HCT116 (cell line): ENCODE measurements at regions of chr21 and their contacts with region 1.

Region 1: GRCh38 chr21:36589355-36589971 is 109.5 kb upstream of the SIM2 start:
- DNase-seq: peak; percentile 59
- ATAC-seq: peak; percentile 96
- H3K4me3 ChIP-seq: no peak overlapping the region
- H3K27ac ChIP-seq: no peak overlapping the region
- H3K4me1 ChIP-seq: peaks cover 3 to 17% of the 10 kb centered on the region in 2 experiments; a peak in 3 of 4 replicates
- H3K27me3 ChIP-seq: no peaks in the 10 kb centered on the region
- CTCF ChIP-seq: peak; percentile 64 to 82 (median 80)
- POLR2A ChIP-seq: no peak
- RAD21 ChIP-seq: peak; percentile 73

Region 2: GRCh38 chr21:36419996-36420395 is 169.5 kb before region 1 on chr21:
- CTCF ChIA-PET with region 1: no interaction called
- POLR2A ChIA-PET with region 1: no interaction called
- RAD21 ChIA-PET with region 1: no interaction called
- intact Hi-C with region 1: loop called (anchors 1 kb)
- DNase-seq: peak; percentile 77
- ATAC-seq: peak; percentile 90
- H3K4me3 ChIP-seq: no peak overlapping the region
- H3K27ac ChIP-seq: no peak overlapping the region
- H3K4me1 ChIP-seq: 0 out of 4 replicates have a peak, but pooled peaks cover 0 to 2% of the 10 kb centered on the region in 2 experiments
- H3K27me3 ChIP-seq: no peaks in the 10 kb centered on the region
- CTCF ChIP-seq: peak; percentile 45 to 81 (median 78); a peak in 5 of 6 replicates
- POLR2A ChIP-seq: no peak
- RAD21 ChIP-seq: peak; percentile 77

Region 3: GRCh38 chr21:36747815-36748383 is 158.4 kb after region 1 on chr21:
- CTCF ChIA-PET with region 1: no interaction called
- POLR2A ChIA-PET with region 1: no interaction called
- RAD21 ChIA-PET with region 1: no interaction called
- intact Hi-C with region 1: no loop called
- DNase-seq: no peak
- ATAC-seq: no peak
- H3K4me3 ChIP-seq: no peak overlapping the region
- H3K27ac ChIP-seq: no peak overlapping the region
- H3K4me1 ChIP-seq: no peaks in the 10 kb centered on the region
- H3K27me3 ChIP-seq: no peaks in the 10 kb centered on the region
- CTCF ChIP-seq: no peak
- POLR2A ChIP-seq: no peak
- RAD21 ChIP-seq: no peak

Region 4: DNA sequence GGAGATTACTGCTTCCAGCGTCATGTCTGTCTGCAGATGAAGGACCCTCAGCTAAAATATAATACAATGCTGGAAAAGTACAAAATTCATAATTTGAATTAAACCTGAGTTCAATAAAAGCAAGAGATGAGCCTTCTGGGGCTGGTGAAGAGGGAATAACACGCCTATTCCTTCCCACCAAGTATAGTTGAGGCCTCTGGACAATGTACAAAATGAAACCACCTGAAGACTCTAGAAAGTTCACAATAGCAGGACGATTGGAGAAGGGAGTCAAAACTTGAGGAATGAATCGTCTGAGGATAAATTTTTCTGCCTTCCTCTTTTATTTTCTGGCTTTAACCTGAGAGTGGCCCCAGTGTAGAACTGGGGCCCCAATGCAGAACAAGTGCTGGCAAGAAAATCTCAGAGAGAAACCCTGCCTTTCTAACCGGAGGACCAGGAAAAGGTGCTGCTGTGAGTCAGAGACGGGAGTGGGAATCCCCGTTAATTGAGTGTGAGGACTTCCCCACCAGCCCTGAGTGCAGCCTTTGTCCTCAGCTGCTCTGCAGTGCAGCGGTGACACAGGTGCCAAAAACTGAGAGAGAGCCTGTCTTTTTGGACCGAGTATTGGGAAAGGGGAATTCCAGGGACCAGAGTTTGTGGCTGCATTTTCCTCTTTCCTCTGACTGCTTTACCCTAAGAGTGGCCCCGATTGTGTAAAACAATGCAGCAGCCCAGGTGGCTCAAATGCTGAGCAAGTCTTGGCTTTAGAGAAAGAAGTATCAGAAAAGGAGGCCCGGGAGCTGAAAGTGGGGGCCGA is 1042.1 kb after region 1 on chr21:
- CTCF ChIA-PET with region 1: no interaction called
- POLR2A ChIA-PET with region 1: no interaction called
- RAD21 ChIA-PET with region 1: no interaction called
- intact Hi-C with region 1: no loop called
- DNase-seq: no peak
- ATAC-seq: no peak
- H3K4me3 ChIP-seq: no peak overlapping the region
- H3K27ac ChIP-seq: no peak overlapping the region
- H3K4me1 ChIP-seq: no peaks in the 10 kb centered on the region
- H3K27me3 ChIP-seq: no peaks in the 10 kb centered on the region
- CTCF ChIP-seq: no peak
- POLR2A ChIP-seq: no peak
- RAD21 ChIP-seq: no peak